ENCODE measurements at regions of chr1 and their contacts with region 1.

Region 1: GRCh38 chr1:154272217-154272998 is at the start of gene HAX1:
- DNase-seq: peak; percentile 93 to 96
- ATAC-seq: peak; percentile 93 to 95
- H3K4me3 ChIP-seq: peak within 1 kb of the TSS; percentile 89
- H3K27ac ChIP-seq: peak within 1 kb of the TSS; percentile 92 to 94
- H3K4me1 ChIP-seq: peaks cover 15% of the 10 kb centered on the region
- CTCF ChIP-seq: peak; percentile 92
- EP300 ChIP-seq: no peak
- POLR2A ChIP-seq: peak; percentile 61
- RAD21 ChIP-seq: peak; percentile 88 to 92
- polyA plus RNA-seq, gene HAX1: 123 and 130 TPM in 2 replicates

Region 2: GRCh38 chr1:154176337-154176736 is 96.1 kb before region 1 on chr1:
- CTCF ChIA-PET with region 1: interaction called, 12 read pairs
- POLR2A ChIA-PET with region 1: no interaction called
- DNase-seq: no peak
- ATAC-seq: peak in 1 of 2 experiments; percentile 13; a peak in 2 of 6 replicates
- H3K4me3 ChIP-seq: no peak overlapping the region
- H3K27ac ChIP-seq: no peak overlapping the region
- H3K4me1 ChIP-seq: peaks cover 51% of the 10 kb centered on the region
- CTCF ChIP-seq: no peak
- EP300 ChIP-seq: no peak
- POLR2A ChIP-seq: no peak
- RAD21 ChIP-seq: no peak

Region 3: GRCh38 chr1:154256686-154257085 is 15.7 kb before region 1 on chr1:
- CTCF ChIA-PET with region 1: interaction called, 20 read pairs
- POLR2A ChIA-PET with region 1: no interaction called
- DNase-seq: no peak
- ATAC-seq: no peak
- H3K4me3 ChIP-seq: no peak overlapping the region
- H3K27ac ChIP-seq: no peak overlapping the region
- H3K4me1 ChIP-seq: no peaks in the 10 kb centered on the region
- CTCF ChIP-seq: no peak
- EP300 ChIP-seq: no peak
- POLR2A ChIP-seq: no peak
- RAD21 ChIP-seq: no peak

Measured in A549 (cell line).